ENCODE measurements at regions of chr2 and their contacts with region 1.

Region 1: DNA sequence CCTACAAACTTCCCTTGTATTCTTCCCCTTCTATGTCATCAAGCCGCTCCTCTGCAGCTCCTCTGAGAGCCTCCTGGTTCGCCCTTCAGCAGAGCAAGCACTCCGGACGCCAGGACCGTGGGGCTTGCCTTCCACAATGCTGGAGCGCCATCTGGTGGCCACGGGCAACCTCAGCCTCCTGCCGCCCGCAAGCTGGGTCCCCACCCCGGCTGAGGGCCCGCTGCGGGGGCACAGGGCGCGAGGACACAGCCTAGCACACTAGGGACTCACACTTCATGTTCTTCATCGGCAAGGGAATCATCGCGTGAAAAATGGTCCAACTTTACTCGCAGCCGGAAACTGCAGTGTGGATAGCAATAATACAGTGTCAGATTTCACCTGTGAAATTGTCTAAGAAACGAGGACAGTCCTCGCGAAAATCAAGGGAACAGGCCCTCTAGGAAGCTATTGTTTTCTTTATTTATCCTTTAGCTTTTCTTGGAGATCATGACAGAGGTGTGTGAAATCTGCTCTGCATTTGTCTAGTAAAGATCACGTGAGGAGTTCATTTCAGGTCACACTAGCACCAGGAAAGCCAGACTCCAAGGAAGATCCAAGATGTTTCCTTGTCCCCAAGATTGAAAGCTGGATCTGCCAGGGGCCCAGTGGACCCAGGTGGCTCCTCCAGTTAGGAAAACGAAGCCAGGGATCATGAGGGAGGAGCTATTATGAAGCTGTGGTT is 5.8 kb downstream of the PRLH start:
- DNase-seq: peak; percentile 94
- ATAC-seq: peak; percentile 94
- H3K4me3 ChIP-seq: no peak overlapping the region
- H3K27ac ChIP-seq: no peak overlapping the region
- H3K4me1 ChIP-seq: peaks cover 8% of the 10 kb centered on the region
- H3K27me3 ChIP-seq: no peaks in the 10 kb centered on the region
- CTCF ChIP-seq: peak; percentile 98

Region 2: GRCh38 chr2:237514474-237515130 is 57.6 kb before region 1 on chr2:
- intact Hi-C with region 1: loop called (anchors 5 kb)
- DNase-seq: no peak
- ATAC-seq: no peak
- H3K4me3 ChIP-seq: no peak overlapping the region
- H3K27ac ChIP-seq: no peak overlapping the region
- H3K4me1 ChIP-seq: peaks cover 27% of the 10 kb centered on the region
- H3K27me3 ChIP-seq: no peaks in the 10 kb centered on the region
- CTCF ChIP-seq: no peak

Region 3: GRCh38 chr2:237700512-237701032 is 128.4 kb after region 1 on chr2:
- intact Hi-C with region 1: no loop called
- DNase-seq: peak; percentile 67
- ATAC-seq: peak; percentile 28
- H3K4me3 ChIP-seq: peak overlapping the region; percentile 6
- H3K27ac ChIP-seq: peak overlapping the region; percentile 72
- H3K4me1 ChIP-seq: peaks cover 100% of the 10 kb centered on the region
- H3K27me3 ChIP-seq: no peaks in the 10 kb centered on the region
- CTCF ChIP-seq: no peak

Region 4: GRCh38 chr2:238467792-238468191 is 895.6 kb after region 1 on chr2:
- intact Hi-C with region 1: no loop called
- DNase-seq: no peak
- ATAC-seq: no peak
- H3K4me3 ChIP-seq: no peak overlapping the region
- H3K27ac ChIP-seq: no peak overlapping the region
- H3K4me1 ChIP-seq: no peaks in the 10 kb centered on the region
- H3K27me3 ChIP-seq: no peaks in the 10 kb centered on the region
- CTCF ChIP-seq: no peak

Measured in upper lobe of right lung (tissue), 1 donor.